ENCODE measurements at regions of chr5 and their contacts with region 1.

Region 1: GRCh38 chr5:98940581-98940980 is 11.8 kb upstream of the CHD1 start:
- DNase-seq: no peak
- ATAC-seq: no peak
- H3K4me3 ChIP-seq: no peak overlapping the region
- H3K4me1 ChIP-seq: no peaks in the 10 kb centered on the region
- CTCF ChIP-seq: no peak

Region 2: DNA sequence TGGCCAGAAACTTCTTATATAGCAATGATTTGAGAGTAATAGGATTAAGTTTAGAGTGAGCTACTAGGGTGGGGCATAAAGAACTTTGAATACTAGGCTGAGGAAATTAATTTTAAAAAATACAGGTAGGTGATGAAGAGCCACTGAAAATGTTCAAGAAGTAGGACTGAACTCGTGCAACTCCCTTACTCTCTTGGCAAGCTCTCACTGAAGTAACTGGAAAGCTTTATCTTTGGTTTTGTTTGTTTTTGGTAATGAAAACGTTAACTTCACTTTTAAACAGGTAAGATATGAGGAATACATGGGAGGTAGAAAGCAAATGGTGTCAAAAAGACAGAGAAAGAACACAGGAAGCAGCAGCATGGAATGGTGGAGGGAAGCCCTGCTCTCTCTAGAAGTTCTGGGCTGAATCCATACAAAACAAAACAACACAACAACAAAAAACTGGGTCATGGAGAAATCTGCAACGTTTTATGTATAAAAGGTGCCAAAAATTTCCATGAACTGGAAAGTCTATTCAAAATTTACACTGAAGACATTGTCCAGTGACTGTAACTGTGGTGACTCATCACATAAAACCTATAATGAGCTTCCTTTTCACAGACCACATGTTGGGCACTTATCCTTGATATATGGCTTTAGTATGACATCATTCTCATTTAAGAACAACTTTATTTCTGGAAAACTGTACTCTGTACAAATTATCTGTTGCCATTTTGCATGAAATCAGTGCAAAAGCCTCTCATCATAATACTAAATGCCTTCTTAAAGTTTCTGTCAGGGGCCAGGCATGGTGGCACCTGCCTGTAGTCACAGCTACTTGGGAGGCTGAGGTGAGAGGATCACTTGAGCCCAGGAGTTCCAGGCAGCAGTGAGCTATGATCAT is 79.5 kb after region 1 on chr5:
- intact Hi-C with region 1: loop called in 1 of 2 experiments (anchors 5 kb)
- DNase-seq: peak in 1 of 3 donors; percentile 25
- ATAC-seq: peak; percentile 95
- H3K4me3 ChIP-seq: no peak overlapping the region
- H3K4me1 ChIP-seq: peaks cover 24% of the 10 kb centered on the region
- CTCF ChIP-seq: no peak

Region 3: DNA sequence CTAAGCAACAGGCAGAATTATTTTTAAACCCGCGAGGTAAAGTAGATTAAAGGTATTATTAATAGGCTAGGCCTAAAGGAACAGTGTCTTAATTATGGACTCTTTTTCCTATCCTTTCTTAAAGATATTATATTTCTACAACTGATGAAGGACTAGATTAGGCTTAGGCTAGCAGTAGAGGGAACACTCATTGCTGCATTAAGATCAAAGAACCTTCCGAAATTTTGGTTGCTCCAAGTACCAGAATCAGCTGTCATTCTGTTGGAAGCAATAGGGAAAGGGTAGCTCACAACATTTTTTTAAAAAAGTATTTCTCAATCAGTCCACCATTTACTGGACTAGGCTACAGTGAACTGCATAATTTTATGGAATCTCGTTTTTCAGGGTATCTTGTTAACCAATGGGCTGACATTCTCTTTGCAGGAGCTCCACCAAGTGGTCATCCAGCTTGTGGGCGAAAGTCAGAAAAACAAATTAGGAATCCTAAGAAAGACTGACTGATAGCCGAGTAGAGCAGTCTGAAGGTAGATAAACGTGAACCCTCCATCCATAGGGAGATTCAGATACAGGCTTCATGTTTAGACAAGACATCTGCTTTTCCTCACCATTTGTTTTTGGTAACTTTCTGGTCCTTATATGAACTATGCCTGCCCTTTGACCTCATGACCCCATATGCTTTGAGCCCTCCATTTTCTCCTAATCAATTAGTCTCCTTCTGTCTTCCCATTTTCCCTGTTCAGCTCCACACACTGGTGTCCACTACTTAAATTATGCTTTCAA is 91.8 kb after region 1 on chr5:
- intact Hi-C with region 1: no loop called
- DNase-seq: peak in 2 of 3 donors; percentile 55 to 88
- ATAC-seq: peak; percentile 76
- H3K4me3 ChIP-seq: no peak overlapping the region
- H3K4me1 ChIP-seq: peaks cover 18% of the 10 kb centered on the region
- CTCF ChIP-seq: peak; percentile 42